GM12878 (cell line): ENCODE measurements at regions of chr18 and their contacts with region 1.

Region 1: DNA sequence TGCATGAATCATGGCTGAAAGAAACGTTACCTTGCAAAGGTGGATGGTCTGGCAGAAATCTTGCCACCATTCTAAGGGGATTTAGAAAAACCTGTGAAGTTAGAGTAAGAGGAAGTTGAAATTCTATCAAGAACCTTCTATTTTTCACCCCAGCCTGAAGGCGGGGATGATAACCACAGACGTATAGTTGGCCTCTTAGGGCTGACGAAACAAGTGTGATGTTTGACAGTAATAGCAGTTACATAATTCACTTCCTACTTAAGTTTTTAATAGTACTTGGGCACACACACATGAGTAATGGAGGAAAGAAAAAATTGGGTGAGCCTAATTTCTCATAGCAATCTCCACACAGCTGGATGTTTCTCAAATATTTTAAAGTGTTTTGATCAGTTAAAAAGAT is 336.6 kb upstream of the SALL3 start:
- DNase-seq: no peak
- ATAC-seq: no peak
- H3K4me3 ChIP-seq: no peak overlapping the region
- H3K27ac ChIP-seq: no peak overlapping the region
- H3K4me1 ChIP-seq: no peaks in the 10 kb centered on the region
- H3K27me3 ChIP-seq: no peaks in the 10 kb centered on the region
- CTCF ChIP-seq: no peak
- EP300 ChIP-seq: no peak
- POLR2A ChIP-seq: no peak
- RAD21 ChIP-seq: no peak

Region 2: GRCh38 chr18:78587096-78587495 is 55.9 kb before region 1 on chr18:
- CTCF ChIA-PET with region 1: no interaction called
- POLR2A ChIA-PET with region 1: no interaction called
- RAD21 ChIA-PET with region 1: no interaction called
- SMC1A ChIA-PET with region 1: no interaction called
- in situ Hi-C with region 1: loop called (anchors 10 kb)
- intact Hi-C with region 1: no loop called
- DNase-seq: no peak
- ATAC-seq: no peak
- H3K4me3 ChIP-seq: no peak overlapping the region
- H3K27ac ChIP-seq: no peak overlapping the region
- H3K4me1 ChIP-seq: no peaks in the 10 kb centered on the region
- H3K27me3 ChIP-seq: no peaks in the 10 kb centered on the region
- CTCF ChIP-seq: no peak
- EP300 ChIP-seq: no peak
- POLR2A ChIP-seq: no peak
- RAD21 ChIP-seq: no peak

Region 3: DNA sequence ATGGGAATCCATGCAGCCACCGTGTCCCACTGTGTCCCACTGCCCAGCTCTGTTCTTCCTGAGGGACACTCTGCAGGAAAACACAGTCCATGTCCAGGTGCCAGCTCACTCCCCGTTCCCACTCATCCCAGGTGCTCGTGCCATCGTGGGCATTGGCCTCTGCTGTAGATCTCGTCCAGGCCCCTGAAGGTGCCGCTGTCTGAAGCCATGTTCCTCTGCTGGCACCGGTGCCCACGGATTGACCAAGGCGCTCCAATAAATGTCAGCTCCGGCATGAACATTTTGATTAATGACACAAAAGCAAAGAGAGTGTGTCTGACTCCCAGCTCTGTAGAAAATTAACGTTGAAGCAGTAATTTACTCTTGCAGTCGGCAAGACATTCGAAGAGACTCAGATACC is 56.5 kb after region 1 on chr18:
- CTCF ChIA-PET with region 1: no interaction called
- POLR2A ChIA-PET with region 1: no interaction called
- RAD21 ChIA-PET with region 1: no interaction called
- SMC1A ChIA-PET with region 1: no interaction called
- in situ Hi-C with region 1: no loop called
- intact Hi-C with region 1: no loop called
- DNase-seq: no peak
- ATAC-seq: no peak
- H3K4me3 ChIP-seq: no peak overlapping the region
- H3K27ac ChIP-seq: no peak overlapping the region
- H3K4me1 ChIP-seq: no peaks in the 10 kb centered on the region
- H3K27me3 ChIP-seq: no peaks in the 10 kb centered on the region
- CTCF ChIP-seq: no peak
- EP300 ChIP-seq: no peak
- POLR2A ChIP-seq: no peak
- RAD21 ChIP-seq: no peak

Region 4: DNA sequence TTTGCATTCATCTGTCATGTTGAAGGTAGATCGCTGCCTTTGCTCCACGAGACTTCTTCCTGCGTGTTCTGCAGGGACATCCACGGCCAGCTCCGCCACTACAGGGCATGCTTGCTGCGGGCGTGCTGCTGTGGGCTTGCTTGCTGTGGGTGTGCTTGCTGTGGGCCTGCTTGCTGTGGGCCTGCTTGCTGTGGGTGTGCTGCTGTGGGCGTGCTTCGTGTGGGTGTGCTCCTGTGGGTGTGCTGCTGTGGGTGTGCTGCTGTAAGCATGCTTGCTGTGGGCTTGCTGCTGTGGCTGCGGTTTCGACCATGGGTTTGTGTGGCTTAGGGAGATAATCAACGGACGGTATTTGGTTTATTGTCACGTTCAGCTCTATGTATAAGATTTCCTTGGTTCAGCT is 591.4 kb after region 1 on chr18:
- CTCF ChIA-PET with region 1: no interaction called
- POLR2A ChIA-PET with region 1: no interaction called
- RAD21 ChIA-PET with region 1: no interaction called
- SMC1A ChIA-PET with region 1: no interaction called
- in situ Hi-C with region 1: no loop called
- intact Hi-C with region 1: no loop called
- DNase-seq: no peak
- ATAC-seq: no peak
- H3K4me3 ChIP-seq: no peak overlapping the region
- H3K27ac ChIP-seq: no peak overlapping the region
- H3K4me1 ChIP-seq: no peaks in the 10 kb centered on the region
- H3K27me3 ChIP-seq: no peaks in the 10 kb centered on the region
- CTCF ChIP-seq: no peak
- EP300 ChIP-seq: no peak
- POLR2A ChIP-seq: no peak
- RAD21 ChIP-seq: no peak